ENCODE measurements at regions of chr19 and their contacts with region 1.

Region 1: GRCh38 chr19:44954824-44955586 is at the start of gene CLPTM1:
- DNase-seq: peak; percentile 98
- H3K4me3 Mint-ChIP-seq: peak within 1 kb of the TSS; percentile 95
- H3K27ac Mint-ChIP-seq: peak within 1 kb of the TSS; percentile 94
- H3K4me1 Mint-ChIP-seq: peaks cover 36% of the 10 kb centered on the region
- H3K27me3 Mint-ChIP-seq: no peaks in the 10 kb centered on the region
- total RNA-seq, gene CLPTM1: 71.7 and 76.6 TPM in 2 replicates

Region 2: DNA sequence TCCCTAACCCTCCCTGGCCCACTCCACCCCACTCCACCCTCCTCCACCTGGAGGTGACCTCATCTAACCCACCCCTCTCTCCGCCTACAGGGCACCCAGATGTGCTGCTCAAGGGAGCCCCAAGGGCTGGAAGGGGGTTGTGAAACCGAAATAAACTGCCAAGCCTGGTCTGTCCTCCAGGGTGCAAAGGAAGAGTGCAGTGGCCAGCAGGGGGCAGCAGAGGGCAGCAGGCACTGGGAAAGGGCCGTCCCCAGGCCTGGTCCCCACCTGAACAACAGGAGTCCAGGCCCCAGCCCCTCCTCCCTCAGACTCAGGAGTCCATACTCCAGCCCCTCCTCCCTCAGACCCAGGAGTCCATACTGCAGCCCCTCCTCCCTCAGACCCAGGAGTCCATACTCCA is 154.5 kb before region 1 on chr19:
- intact Hi-C with region 1: loop called (anchors 5 kb)
- DNase-seq: peak; percentile 96
- H3K4me3 Mint-ChIP-seq: no peak overlapping the region
- H3K27ac Mint-ChIP-seq: no peak overlapping the region
- H3K4me1 Mint-ChIP-seq: peaks cover 12% of the 10 kb centered on the region
- H3K27me3 Mint-ChIP-seq: no peaks in the 10 kb centered on the region

Region 3: GRCh38 chr19:44875666-44876451 is 79.1 kb before region 1 on chr19:
- intact Hi-C with region 1: no loop called
- DNase-seq: no peak
- H3K4me3 Mint-ChIP-seq: no peak overlapping the region
- H3K27ac Mint-ChIP-seq: no peak overlapping the region
- H3K4me1 Mint-ChIP-seq: peaks cover 2% of the 10 kb centered on the region
- H3K27me3 Mint-ChIP-seq: no peaks in the 10 kb centered on the region

Region 4: GRCh38 chr19:44890366-44891015 is 64.5 kb before region 1 on chr19:
- intact Hi-C with region 1: loop called (anchors 1 kb)
- DNase-seq: peak; percentile 100
- H3K4me3 Mint-ChIP-seq: peak overlapping the region; percentile 84
- H3K27ac Mint-ChIP-seq: peak overlapping the region; percentile 97
- H3K4me1 Mint-ChIP-seq: peaks cover 25% of the 10 kb centered on the region
- H3K27me3 Mint-ChIP-seq: no peaks in the 10 kb centered on the region

Region 5: DNA sequence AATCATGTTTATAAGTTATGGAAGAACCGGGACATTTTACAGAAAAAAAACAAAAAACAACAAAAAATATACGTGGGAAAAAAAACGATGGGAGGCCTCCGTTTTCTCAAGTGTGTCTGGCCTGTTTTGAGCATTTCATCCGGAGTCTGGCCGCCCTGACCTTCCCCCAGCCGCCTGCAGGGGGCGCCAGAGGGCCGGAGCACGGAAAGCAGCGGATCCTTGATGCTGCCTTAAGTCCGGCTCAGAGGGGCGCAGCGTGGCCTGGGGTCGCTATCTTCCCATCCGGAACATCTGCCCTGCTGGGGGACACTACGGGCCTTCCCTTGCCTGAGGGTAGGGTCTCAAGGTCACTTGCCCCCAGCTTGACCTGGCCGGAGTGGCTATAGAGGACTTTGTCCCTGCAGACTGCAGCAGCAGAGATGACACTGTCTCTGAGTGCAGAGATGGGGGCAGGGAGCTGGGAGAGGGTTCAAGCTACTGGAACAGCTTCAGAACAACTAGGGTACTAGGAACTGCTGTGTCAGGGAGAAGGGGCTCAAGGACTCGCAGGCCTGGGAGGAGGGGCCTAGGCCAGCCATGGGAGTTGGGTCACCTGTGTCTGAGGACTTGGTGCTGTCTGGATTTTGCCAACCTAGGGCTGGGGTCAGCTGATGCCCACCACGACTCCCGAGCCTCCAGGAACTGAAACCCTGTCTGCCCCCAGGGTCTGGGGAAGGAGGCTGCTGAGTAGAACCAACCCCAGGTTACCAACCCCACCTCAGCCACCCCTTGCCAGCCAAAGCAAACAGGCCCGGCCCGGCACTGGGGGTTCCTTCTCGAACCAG is 51.2 kb before region 1 on chr19:
- intact Hi-C with region 1: loop called (anchors 1 kb)
- DNase-seq: peak; percentile 93
- H3K4me3 Mint-ChIP-seq: no peak overlapping the region
- H3K27ac Mint-ChIP-seq: no peak overlapping the region
- H3K4me1 Mint-ChIP-seq: peaks cover 5% of the 10 kb centered on the region
- H3K27me3 Mint-ChIP-seq: peaks cover 15% of the 10 kb centered on the region

Region 6: GRCh38 chr19:45001087-45001739 is 46.2 kb after region 1 on chr19 and contains the start of gene RELB:
- intact Hi-C with region 1: loop called (anchors 1 kb)
- DNase-seq: peak; percentile 100
- H3K4me3 Mint-ChIP-seq: peak within 1 kb of the TSS; percentile 99
- H3K27ac Mint-ChIP-seq: peak within 1 kb of the TSS; percentile 100
- H3K4me1 Mint-ChIP-seq: peaks cover 13% of the 10 kb centered on the region
- H3K27me3 Mint-ChIP-seq: no peaks in the 10 kb centered on the region
- total RNA-seq, gene RELB: 67.6 and 72.7 TPM in 2 replicates

Region 7: DNA sequence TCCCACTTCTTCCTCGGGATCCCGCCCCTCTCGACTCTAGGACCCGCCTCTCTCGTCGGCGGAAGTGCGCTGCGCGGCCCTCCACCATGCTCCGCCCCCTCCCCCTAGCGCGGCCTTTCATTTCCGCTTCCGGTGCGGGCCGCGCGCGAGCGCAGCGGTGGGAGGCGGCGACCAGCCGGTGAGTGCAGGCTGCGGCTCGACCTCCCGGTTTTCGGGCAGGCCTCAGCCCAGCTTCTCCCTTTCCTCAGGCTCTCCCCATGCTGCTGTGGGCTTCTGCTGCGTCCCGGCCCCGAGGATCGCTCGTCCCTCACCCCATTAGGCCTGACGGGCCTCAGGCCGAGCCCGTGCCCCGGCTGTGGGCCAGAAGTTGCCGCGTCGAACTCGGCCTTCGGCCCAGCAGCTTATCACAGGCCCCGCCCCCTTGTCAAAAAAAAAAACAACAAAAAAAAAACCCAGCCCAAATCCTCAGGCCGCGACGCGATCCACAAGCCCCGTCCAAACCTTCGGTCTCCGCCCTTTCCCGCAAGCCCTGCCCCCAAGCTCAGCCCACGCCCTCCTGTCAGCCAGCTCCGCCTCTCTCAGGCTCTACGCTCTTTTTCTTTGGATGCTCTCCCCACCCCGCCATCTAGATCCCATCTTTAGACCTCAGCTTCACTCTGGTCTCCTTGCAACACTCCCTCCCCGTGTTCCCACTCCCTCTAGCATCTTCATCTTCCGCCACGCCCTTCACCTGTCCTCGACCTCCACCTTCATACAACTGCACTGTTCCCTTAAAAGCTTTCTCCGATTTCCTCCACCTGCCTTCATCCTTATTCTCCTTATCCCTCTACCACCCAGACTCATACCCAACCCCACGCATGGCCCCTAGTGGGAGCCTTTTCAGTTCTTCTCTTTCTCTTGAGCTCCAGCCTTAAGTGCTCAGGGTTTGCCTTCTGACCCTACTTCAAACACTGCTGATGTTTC is 84.2 kb after region 1 on chr19 and contains the start of gene CLASRP:
- intact Hi-C with region 1: loop called (anchors 1 kb)
- DNase-seq: peak; percentile 97
- H3K4me3 Mint-ChIP-seq: peak within 1 kb of the TSS; percentile 88
- H3K27ac Mint-ChIP-seq: peak within 1 kb of the TSS; percentile 95
- H3K4me1 Mint-ChIP-seq: peaks cover 26% of the 10 kb centered on the region
- H3K27me3 Mint-ChIP-seq: no peaks in the 10 kb centered on the region
- total RNA-seq, gene CLASRP: 107 and 111 TPM in 2 replicates

Region 8: GRCh38 chr19:45195764-45196163 is 240.8 kb after region 1 on chr19:
- intact Hi-C with region 1: no loop called
- DNase-seq: no peak
- H3K4me3 Mint-ChIP-seq: no peak overlapping the region
- H3K27ac Mint-ChIP-seq: no peak overlapping the region
- H3K4me1 Mint-ChIP-seq: no peaks in the 10 kb centered on the region
- H3K27me3 Mint-ChIP-seq: peaks cover 10% of the 10 kb centered on the region